Transverse colon (tissue), 4 donors: ENCODE measurements at regions of chr16 and their contacts with region 1.

Region 1: DNA sequence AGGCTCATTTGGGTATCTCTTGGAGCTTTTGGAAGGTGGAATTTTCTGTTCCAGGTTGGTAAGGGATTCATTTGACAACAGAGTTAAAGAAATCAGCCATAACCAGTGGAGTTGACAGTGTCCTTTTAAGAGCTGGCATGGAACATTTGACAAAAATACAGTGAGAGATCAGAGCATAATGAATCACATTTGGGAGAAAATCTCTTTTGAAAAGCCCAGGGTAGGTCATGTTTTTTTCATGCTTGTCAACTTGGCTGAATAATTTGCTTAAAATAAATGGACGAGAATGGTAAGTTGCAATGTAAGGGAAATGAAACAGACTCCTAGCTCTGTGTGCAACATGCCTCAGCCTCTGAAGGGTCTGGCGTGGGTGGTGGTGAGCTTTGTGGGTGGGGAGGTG is 235.3 kb upstream of the N4BP1 start:
- DNase-seq: no peak
- H3K4me3 ChIP-seq: no peak overlapping the region
- H3K27ac ChIP-seq: no peak overlapping the region
- H3K4me1 ChIP-seq: no peaks in the 10 kb centered on the region
- H3K27me3 ChIP-seq: no peaks in the 10 kb centered on the region
- CTCF ChIP-seq: no peak
- EP300 ChIP-seq: no peak
- POLR2A ChIP-seq: no peak

Region 2: GRCh38 chr16:48870141-48870540 is 24.9 kb after region 1 on chr16:
- in situ Hi-C with region 1: no loop called
- intact Hi-C with region 1: loop called (anchors 1 kb)
- DNase-seq: no peak
- H3K4me3 ChIP-seq: no peak overlapping the region
- H3K27ac ChIP-seq: no peak overlapping the region
- H3K4me1 ChIP-seq: no peaks in the 10 kb centered on the region
- H3K27me3 ChIP-seq: no peaks in the 10 kb centered on the region
- CTCF ChIP-seq: no peak
- EP300 ChIP-seq: no peak
- POLR2A ChIP-seq: no peak